Heart right ventricle (tissue), 16 donors: ENCODE measurements at regions of chr7 and their contacts with region 1.

Region 1: DNA sequence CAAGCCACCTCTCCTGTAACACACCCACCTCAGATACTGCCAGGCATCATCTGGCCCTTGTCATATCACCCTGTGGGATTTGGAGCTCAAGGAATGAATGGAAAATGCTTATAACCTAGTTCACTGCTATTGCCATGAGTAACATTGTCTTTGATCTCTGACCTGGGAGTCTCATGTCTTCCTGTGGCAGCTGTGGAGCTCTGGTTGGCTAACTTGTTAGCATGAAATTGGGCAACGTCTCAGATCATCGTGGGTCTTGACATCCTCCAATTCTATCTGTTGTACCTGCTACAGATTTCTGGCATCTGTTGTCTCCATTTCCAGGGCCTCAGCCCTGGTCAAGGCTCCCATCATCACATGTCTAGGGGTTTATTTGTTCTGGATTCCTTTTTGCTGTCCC is 2.2 kb upstream of the TMEM270 start:
- DNase-seq: no peak
- ATAC-seq: no peak
- H3K4me3 ChIP-seq: no peak overlapping the region
- H3K27ac ChIP-seq: no peak overlapping the region
- H3K4me1 ChIP-seq: peaks cover 0 to 8% (median 6%) of the 10 kb centered on the region in 9 donors
- H3K27me3 ChIP-seq: peaks cover 0 to 24% (median 11%) of the 10 kb centered on the region in 7 donors
- CTCF ChIP-seq: no peak

Region 2: DNA sequence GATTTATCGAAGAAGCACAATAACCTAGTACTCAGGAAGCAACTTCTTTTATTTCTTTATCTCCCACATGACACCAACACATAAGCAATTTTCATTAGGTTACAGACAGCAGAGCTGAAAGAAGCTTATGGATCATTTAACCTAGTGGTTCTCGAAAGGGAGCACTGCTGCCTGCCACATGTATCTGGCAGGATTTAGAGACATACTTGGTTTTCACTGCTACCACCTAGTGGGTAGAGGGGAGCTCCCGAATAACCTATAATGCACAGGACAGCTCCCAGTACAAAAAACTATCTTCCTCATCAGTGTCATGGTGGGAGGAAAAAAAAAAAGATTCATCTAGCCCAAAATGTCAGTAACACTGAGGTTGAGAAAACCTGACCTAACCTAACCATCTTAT is 390.7 kb before region 1 on chr7:
- intact Hi-C with region 1: no loop called
- DNase-seq: no peak
- ATAC-seq: no peak
- H3K4me3 ChIP-seq: no peak overlapping the region
- H3K27ac ChIP-seq: no peak overlapping the region
- H3K4me1 ChIP-seq: no peaks in the 10 kb centered on the region
- H3K27me3 ChIP-seq: no peaks in the 10 kb centered on the region
- CTCF ChIP-seq: no peak

Region 3: GRCh38 chr7:73811760-73812168 is 47.0 kb before region 1 on chr7:
- intact Hi-C with region 1: loop called in 7 of 10 experiments (anchors 1 to 5 kb)
- DNase-seq: peak; percentile 36 to 68
- ATAC-seq: peak; percentile 68 to 87 (median 82)
- H3K4me3 ChIP-seq: no peak overlapping the region
- H3K27ac ChIP-seq: no peak overlapping the region
- H3K4me1 ChIP-seq: no peaks in the 10 kb centered on the region
- H3K27me3 ChIP-seq: peaks cover 0 to 26% (median 15%) of the 10 kb centered on the region in 7 donors
- CTCF ChIP-seq: peak; percentile 62 to 87 (median 77)

Region 4: DNA sequence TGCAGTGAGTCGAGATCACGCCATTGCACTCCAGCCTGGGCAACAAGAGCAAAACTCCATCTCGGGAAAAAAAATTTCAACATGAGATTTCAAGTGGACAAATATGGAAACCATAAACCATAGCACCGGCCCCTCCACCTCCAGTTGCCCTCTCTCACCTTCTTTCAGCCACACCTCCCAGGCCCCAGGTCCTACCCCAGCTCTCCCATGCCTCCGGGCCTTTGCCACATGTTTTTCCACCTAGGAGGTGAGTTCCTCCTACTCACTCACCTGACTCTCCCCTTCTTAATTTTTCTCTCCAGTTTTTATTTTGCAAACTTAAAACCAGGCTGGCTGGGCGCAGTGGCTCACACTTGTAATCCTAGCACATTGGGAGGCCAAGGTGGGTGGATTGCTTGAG is 41.7 kb before region 1 on chr7:
- intact Hi-C with region 1: loop called in 3 of 10 experiments (anchors 5 kb)
- DNase-seq: no peak
- ATAC-seq: no peak
- H3K4me3 ChIP-seq: no peak overlapping the region
- H3K27ac ChIP-seq: no peak overlapping the region
- H3K4me1 ChIP-seq: no peaks in the 10 kb centered on the region
- H3K27me3 ChIP-seq: peaks cover 0 to 11% (median 0%) of the 10 kb centered on the region in 7 donors
- CTCF ChIP-seq: no peak